GM12878 (cell line): ENCODE measurements at regions of chr10 and their contacts with region 1.

Region 1: DNA sequence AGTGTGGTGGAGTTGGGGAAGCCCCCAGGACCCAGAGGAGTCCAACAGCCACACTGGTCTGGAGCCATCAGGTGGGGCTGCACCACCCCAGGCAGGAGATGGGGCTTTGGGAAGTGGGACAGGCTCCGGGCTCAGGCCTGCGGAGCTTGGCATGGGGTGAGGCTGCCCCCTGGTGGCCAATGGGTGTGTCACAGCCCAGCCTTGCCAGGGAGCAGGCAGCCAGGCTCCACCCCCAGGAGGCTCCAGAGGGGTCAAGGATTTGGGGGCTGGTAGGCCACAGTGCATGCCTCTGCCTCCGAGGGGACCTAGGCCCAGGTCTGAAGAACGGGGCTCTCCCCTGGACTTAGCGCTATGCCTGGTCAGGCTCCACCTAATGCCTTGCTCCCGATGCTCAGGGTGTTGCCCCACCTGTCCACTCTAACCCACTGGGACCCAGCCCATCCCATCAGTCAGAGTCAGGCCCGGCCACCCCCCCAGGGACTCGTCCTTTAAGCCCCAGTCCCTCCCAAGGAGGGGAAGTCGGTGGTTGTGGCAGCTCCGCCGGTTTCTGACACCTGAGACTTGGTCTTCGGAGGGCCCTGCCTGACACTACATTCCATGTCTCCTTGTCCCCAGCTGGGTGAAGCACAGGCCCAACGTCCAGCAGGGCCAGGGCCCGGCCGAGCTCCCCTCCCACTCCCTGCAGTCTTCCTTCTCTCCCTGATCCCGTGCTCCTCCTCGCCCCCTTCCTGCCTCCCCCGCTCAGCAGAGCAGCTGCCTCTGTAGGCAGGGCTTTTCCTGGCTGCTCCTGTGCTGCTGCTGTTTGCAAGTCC is 11.3 kb upstream of the SAMD8 start:
- DNase-seq: no peak
- ATAC-seq: peak; percentile 98
- H3K4me3 ChIP-seq: no peak overlapping the region
- H3K27ac ChIP-seq: no peak overlapping the region
- H3K4me1 ChIP-seq: no peaks in the 10 kb centered on the region; the same call in 1 of the 2 replicates
- H3K27me3 ChIP-seq: no peaks in the 10 kb centered on the region
- CTCF ChIP-seq: peak; percentile 94 to 99 (median 98)
- EP300 ChIP-seq: no peak
- POLR2A ChIP-seq: no peak
- RAD21 ChIP-seq: peak; percentile 98

Region 2: DNA sequence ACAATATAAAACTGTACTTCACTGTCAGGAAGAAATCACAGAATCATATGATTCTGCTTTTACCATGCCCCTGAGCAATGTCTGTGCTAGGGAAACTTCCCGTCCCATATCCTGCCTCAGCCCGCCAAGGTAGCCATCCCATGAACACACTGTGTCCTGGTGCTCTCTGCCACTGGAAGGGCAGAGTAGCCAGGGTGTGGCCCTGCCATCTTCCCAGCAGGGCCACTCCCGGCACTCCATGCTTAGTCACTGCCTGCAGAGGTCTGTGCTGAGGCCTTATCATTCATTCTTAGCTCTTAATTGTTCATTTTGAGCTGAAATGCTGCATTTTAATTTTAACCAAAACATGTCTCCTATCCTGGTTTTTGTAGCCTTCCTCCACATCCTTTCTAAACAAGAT is 981.4 kb before region 1 on chr10:
- CTCF ChIA-PET with region 1: no interaction called
- POLR2A ChIA-PET with region 1: no interaction called
- RAD21 ChIA-PET with region 1: no interaction called
- SMC1A ChIA-PET with region 1: no interaction called
- in situ Hi-C with region 1: no loop called
- intact Hi-C with region 1: loop called (anchors 10 kb)
- DNase-seq: no peak
- ATAC-seq: no peak
- H3K4me3 ChIP-seq: no peak overlapping the region
- H3K27ac ChIP-seq: no peak overlapping the region
- H3K4me1 ChIP-seq: peaks cover 10% of the 10 kb centered on the region
- H3K27me3 ChIP-seq: no peaks in the 10 kb centered on the region
- CTCF ChIP-seq: no peak
- EP300 ChIP-seq: no peak
- POLR2A ChIP-seq: no peak
- RAD21 ChIP-seq: no peak

Region 3: DNA sequence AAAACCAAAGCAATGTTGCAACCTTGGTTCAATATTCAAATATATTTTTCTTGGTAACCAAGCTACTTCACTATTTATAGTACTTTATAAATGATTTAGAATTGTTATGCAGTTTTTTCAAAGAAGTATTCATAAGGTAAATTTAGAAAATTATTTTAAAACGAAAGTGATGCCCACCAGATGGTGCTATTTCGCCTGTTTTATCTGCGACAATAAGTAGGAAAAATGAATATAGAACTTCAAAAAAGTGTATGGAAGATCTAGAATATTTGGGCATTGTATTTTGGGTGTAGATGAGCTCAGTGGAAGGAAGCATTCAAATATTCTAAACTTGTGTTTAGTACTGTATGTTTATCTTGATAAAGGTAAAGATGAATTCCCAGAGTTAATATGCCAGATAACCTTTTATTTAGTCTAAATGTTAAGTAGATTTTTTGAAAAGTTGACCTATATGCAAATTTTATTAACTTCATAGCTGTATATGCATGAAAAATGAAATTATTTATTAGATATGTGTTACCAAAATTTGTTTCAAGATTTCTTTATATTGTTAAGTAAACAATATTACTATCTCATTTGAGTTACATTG is 856.0 kb before region 1 on chr10:
- CTCF ChIA-PET with region 1: interaction called, 71 read pairs
- POLR2A ChIA-PET with region 1: no interaction called
- RAD21 ChIA-PET with region 1: interaction called, 25 read pairs
- SMC1A ChIA-PET with region 1: interaction called, 21 read pairs
- in situ Hi-C with region 1: no loop called
- intact Hi-C with region 1: loop called (anchors 1 kb)
- DNase-seq: no peak
- ATAC-seq: no peak
- H3K4me3 ChIP-seq: no peak overlapping the region
- H3K27ac ChIP-seq: no peak overlapping the region
- H3K4me1 ChIP-seq: no peaks in the 10 kb centered on the region
- H3K27me3 ChIP-seq: no peaks in the 10 kb centered on the region
- CTCF ChIP-seq: peak; percentile 16 to 48 (median 40); a peak in 3 of 6 replicates
- EP300 ChIP-seq: no peak
- POLR2A ChIP-seq: no peak
- RAD21 ChIP-seq: peak; percentile 61

Region 4: DNA sequence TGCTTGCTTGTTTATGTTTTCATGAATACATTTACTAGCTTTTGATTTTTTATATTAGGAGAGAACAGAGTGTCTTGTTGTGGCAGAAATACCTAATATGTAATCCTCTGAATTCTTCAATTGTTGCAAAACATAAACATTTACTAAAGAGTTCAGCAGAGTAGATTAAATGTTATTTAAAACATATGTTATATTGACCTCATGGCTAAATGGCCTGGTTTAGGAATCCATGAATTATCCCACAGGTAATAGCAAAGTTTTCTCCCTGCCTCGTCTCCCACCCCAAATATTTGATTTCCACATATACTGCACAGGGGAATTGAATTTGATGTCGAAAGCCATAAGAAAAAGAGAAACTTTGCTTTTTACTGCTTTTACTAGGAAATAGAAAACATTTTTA is 837.3 kb before region 1 on chr10:
- CTCF ChIA-PET with region 1: interaction called, 12 read pairs
- POLR2A ChIA-PET with region 1: no interaction called
- RAD21 ChIA-PET with region 1: interaction called, 6 read pairs
- SMC1A ChIA-PET with region 1: interaction called, 10 read pairs
- in situ Hi-C with region 1: loop called (anchors 5 kb)
- intact Hi-C with region 1: loop called (anchors 1 kb)
- DNase-seq: no peak
- ATAC-seq: no peak
- H3K4me3 ChIP-seq: no peak overlapping the region
- H3K27ac ChIP-seq: no peak overlapping the region
- H3K4me1 ChIP-seq: no peaks in the 10 kb centered on the region
- H3K27me3 ChIP-seq: no peaks in the 10 kb centered on the region
- CTCF ChIP-seq: no peak
- EP300 ChIP-seq: no peak
- POLR2A ChIP-seq: no peak
- RAD21 ChIP-seq: no peak

Region 5: GRCh38 chr10:74419958-74420375 is 680.2 kb before region 1 on chr10:
- CTCF ChIA-PET with region 1: interaction called, 3 read pairs
- POLR2A ChIA-PET with region 1: no interaction called
- RAD21 ChIA-PET with region 1: no interaction called
- SMC1A ChIA-PET with region 1: interaction called, 5 read pairs
- in situ Hi-C with region 1: no loop called
- intact Hi-C with region 1: loop called (anchors 10 kb)
- DNase-seq: peak; percentile 5
- ATAC-seq: peak; percentile 84
- H3K4me3 ChIP-seq: no peak overlapping the region
- H3K27ac ChIP-seq: no peak overlapping the region
- H3K4me1 ChIP-seq: no peaks in the 10 kb centered on the region
- H3K27me3 ChIP-seq: no peaks in the 10 kb centered on the region
- CTCF ChIP-seq: peak; percentile 16 to 44 (median 38); a peak in 4 of 6 replicates
- EP300 ChIP-seq: no peak
- POLR2A ChIP-seq: no peak
- RAD21 ChIP-seq: 0 out of 2 replicates have a peak, but pooled peaks have one; percentile 29

Region 6: DNA sequence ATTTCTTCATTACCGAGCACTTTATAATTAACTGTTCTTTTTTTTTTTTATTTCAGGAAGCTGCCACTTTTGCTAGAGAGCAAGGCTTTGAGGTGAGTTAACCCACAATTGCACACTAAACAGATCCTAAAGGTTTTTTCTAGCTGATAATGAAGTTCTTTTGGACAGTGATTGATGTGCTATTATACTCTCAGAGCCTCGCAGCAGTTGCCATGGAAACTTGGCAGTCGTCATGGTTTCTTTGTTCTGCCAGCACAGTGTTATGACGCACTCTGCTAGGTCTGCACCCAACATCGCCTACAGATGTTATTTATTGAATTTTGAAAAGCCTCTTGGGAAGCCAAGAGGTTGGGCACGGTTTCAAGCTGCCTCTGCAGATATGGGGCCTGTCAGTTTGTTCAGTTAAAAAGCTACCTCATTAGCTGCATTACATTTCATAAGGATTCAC is 510.9 kb before region 1 on chr10:
- CTCF ChIA-PET with region 1: no interaction called
- POLR2A ChIA-PET with region 1: no interaction called
- RAD21 ChIA-PET with region 1: interaction called, 3 read pairs
- SMC1A ChIA-PET with region 1: no interaction called
- in situ Hi-C with region 1: no loop called
- intact Hi-C with region 1: loop called (anchors 10 kb)
- DNase-seq: peak; percentile 82
- ATAC-seq: peak; percentile 75
- H3K4me3 ChIP-seq: no peak overlapping the region
- H3K27ac ChIP-seq: no peak overlapping the region
- H3K4me1 ChIP-seq: peaks cover 23% of the 10 kb centered on the region
- H3K27me3 ChIP-seq: no peaks in the 10 kb centered on the region
- CTCF ChIP-seq: no peak
- EP300 ChIP-seq: peak; percentile 80 to 92
- POLR2A ChIP-seq: no peak
- RAD21 ChIP-seq: no peak

Region 7: GRCh38 chr10:75111367-75111906 is 11.3 kb after region 1 on chr10 and contains the start of gene SAMD8:
- CTCF ChIA-PET with region 1: interaction called, 13 read pairs
- POLR2A ChIA-PET with region 1: no interaction called
- RAD21 ChIA-PET with region 1: no interaction called
- SMC1A ChIA-PET with region 1: interaction called, 4 read pairs
- in situ Hi-C with region 1: no loop called
- intact Hi-C with region 1: no loop called
- DNase-seq: peak; percentile 83
- ATAC-seq: peak; percentile 87
- H3K4me3 ChIP-seq: peak within 1 kb of the TSS; percentile 94
- H3K27ac ChIP-seq: peak within 1 kb of the TSS; percentile 81
- H3K4me1 ChIP-seq: peaks cover 13% of the 10 kb centered on the region
- H3K27me3 ChIP-seq: no peaks in the 10 kb centered on the region
- CTCF ChIP-seq: peak in 2 of 3 experiments; percentile 4 to 13; a peak in 1 of 6 replicates
- EP300 ChIP-seq: peak in 1 of 2 experiments; percentile 2; a peak in 1 of 4 replicates
- POLR2A ChIP-seq: peak; percentile 96
- RAD21 ChIP-seq: no peak
- polyA plus RNA-seq, gene SAMD8: 2.8 to 3.5 TPM